Naive thymus-derived CD4-positive, alpha-beta T cell (primary cell): ENCODE measurements at regions of chr5 and their contacts with region 1.

Region 1: GRCh38 chr5:131796793-131797693 is at the start of gene FNIP1:
- DNase-seq: peak; percentile 96 to 99 (median 97)
- ATAC-seq: peak; percentile 98
- H3K4me3 ChIP-seq: peak within 1 kb of the TSS; percentile 90
- H3K4me3 Mint-ChIP-seq: peak within 1 kb of the TSS; percentile 88 to 99 (median 97)
- H3K27ac ChIP-seq: peak within 1 kb of the TSS; percentile 95
- H3K27ac Mint-ChIP-seq: peak within 1 kb of the TSS; percentile 92 to 98 (median 97)
- H3K4me1 ChIP-seq: peaks cover 0 to 19% of the 10 kb centered on the region in 2 donors
- H3K4me1 Mint-ChIP-seq: peaks cover 11 to 41% (median 36%) of the 10 kb centered on the region in 7 donors
- H3K27me3 ChIP-seq: no peaks in the 10 kb centered on the region
- H3K27me3 Mint-ChIP-seq: peaks cover 0 to 10% (median 0%) of the 10 kb centered on the region in 5 donors
- total RNA-seq, gene FNIP1: 30.5 to 48.5 (median 40.3) TPM

Region 2: GRCh38 chr5:131165119-131165727 is 631.8 kb before region 1 on chr5 and contains the start of gene HINT1:
- CTCF ChIA-PET with region 1: no interaction called
- POLR2A ChIA-PET with region 1: no interaction called
- intact Hi-C with region 1: loop called in 1 of 2 experiments (anchors 2 kb)
- DNase-seq: peak; percentile 86 to 98 (median 93)
- ATAC-seq: peak; percentile 89
- H3K4me3 ChIP-seq: peak within 1 kb of the TSS; percentile 97
- H3K4me3 Mint-ChIP-seq: peak within 1 kb of the TSS; percentile 93 to 98 (median 97)
- H3K27ac ChIP-seq: peak within 1 kb of the TSS; percentile 91
- H3K27ac Mint-ChIP-seq: peak within 1 kb of the TSS; percentile 95 to 99 (median 98)
- H3K4me1 ChIP-seq: peaks cover 15 to 23% of the 10 kb centered on the region in 2 donors
- H3K4me1 Mint-ChIP-seq: peaks cover 28 to 74% (median 61%) of the 10 kb centered on the region in 7 donors
- H3K27me3 ChIP-seq: no peaks in the 10 kb centered on the region
- H3K27me3 Mint-ChIP-seq: no peaks in the 10 kb centered on the region
- total RNA-seq, gene HINT1: 172 to 319 (median 233) TPM

Region 3: DNA sequence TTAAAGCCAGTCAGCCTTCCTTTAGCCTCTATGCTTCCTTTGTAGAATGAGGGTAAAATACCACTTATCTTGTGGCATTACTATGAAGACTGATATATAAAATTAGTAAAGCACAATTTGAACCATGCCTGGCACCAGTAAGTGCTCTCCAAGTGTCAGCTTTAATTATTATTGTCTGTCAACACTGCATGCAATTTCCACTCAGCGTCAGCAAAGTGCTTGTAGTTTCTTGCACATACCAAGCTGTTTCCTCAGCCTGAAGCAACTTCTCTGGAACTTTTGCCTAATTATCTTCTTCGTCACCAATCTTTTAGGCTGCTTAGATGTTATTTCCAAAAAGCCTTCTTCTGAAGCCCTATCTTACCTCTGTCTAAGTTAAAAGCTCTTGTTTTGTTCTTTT is 355.9 kb before region 1 on chr5:
- CTCF ChIA-PET with region 1: no interaction called
- POLR2A ChIA-PET with region 1: no interaction called
- intact Hi-C with region 1: loop called in 1 of 2 experiments (anchors 10 kb)
- DNase-seq: no peak
- ATAC-seq: no peak
- H3K4me3 ChIP-seq: no peak overlapping the region
- H3K4me3 Mint-ChIP-seq: peak overlapping the region in 1 of 10 donors; percentile 30
- H3K27ac ChIP-seq: no peak overlapping the region
- H3K27ac Mint-ChIP-seq: peak overlapping the region in 7 of 9 donors; percentile 39 to 80 (median 60)
- H3K4me1 ChIP-seq: no peaks in the 10 kb centered on the region
- H3K4me1 Mint-ChIP-seq: peaks cover 4 to 52% (median 35%) of the 10 kb centered on the region in 7 donors
- H3K27me3 ChIP-seq: no peaks in the 10 kb centered on the region
- H3K27me3 Mint-ChIP-seq: no peaks in the 10 kb centered on the region

Region 4: GRCh38 chr5:131640043-131640856 is 156.8 kb before region 1 on chr5:
- CTCF ChIA-PET with region 1: no interaction called
- POLR2A ChIA-PET with region 1: interaction called, 18 read pairs
- intact Hi-C with region 1: loop called (anchors 1 kb)
- DNase-seq: peak in 8 of 9 donors; percentile 23 to 79 (median 42)
- ATAC-seq: peak; percentile 86
- H3K4me3 ChIP-seq: no peak overlapping the region
- H3K4me3 Mint-ChIP-seq: peak overlapping the region; percentile 18 to 81 (median 68)
- H3K27ac ChIP-seq: peak overlapping the region; percentile 64
- H3K27ac Mint-ChIP-seq: peak overlapping the region; percentile 39 to 97 (median 92)
- H3K4me1 ChIP-seq: peaks cover 11 to 26% of the 10 kb centered on the region in 2 donors
- H3K4me1 Mint-ChIP-seq: peaks cover 14 to 53% (median 34%) of the 10 kb centered on the region in 7 donors
- H3K27me3 ChIP-seq: no peaks in the 10 kb centered on the region
- H3K27me3 Mint-ChIP-seq: peaks cover 0 to under 1% (median 0%) of the 10 kb centered on the region in 5 donors

Region 5: DNA sequence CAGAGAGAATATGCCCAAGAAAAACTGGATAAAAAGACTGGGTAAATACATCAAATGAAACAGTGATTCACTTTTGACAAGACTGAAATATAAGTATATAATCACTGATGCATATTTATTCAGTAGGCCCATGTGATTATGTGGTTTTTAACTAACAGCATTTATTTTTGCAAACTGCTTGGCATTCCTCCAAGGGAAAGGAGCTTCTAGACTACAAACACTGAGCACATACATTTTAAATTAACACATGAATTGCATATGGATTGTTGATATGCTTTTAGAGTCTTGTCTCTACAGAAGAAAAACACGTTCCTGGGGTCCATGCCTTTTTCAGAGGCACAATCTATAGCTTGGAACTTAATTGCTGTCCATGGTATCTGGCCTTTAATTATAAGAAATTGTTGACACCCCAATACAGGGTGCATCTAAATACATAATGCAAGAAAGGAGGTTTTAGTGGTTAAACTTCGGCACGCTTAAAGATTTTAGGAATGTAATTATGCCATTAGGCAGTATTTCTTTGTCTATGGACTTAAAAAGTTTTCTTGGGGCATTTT is 155.3 kb after region 1 on chr5:
- CTCF ChIA-PET with region 1: no interaction called
- POLR2A ChIA-PET with region 1: no interaction called
- intact Hi-C with region 1: no loop called
- DNase-seq: no peak
- ATAC-seq: no peak
- H3K4me3 ChIP-seq: no peak overlapping the region
- H3K4me3 Mint-ChIP-seq: no peak overlapping the region
- H3K27ac ChIP-seq: no peak overlapping the region
- H3K27ac Mint-ChIP-seq: no peak overlapping the region
- H3K4me1 ChIP-seq: no peaks in the 10 kb centered on the region
- H3K4me1 Mint-ChIP-seq: peaks cover 0 to 6% (median 0%) of the 10 kb centered on the region in 7 donors
- H3K27me3 ChIP-seq: no peaks in the 10 kb centered on the region
- H3K27me3 Mint-ChIP-seq: peaks cover 0 to 20% (median 0%) of the 10 kb centered on the region in 5 donors

Region 6: GRCh38 chr5:132007399-132008165 is 210.5 kb after region 1 on chr5:
- CTCF ChIA-PET with region 1: interaction called, 3 read pairs
- POLR2A ChIA-PET with region 1: no interaction called
- intact Hi-C with region 1: loop called (anchors 1 to 5 kb)
- DNase-seq: peak; percentile 47 to 73 (median 64)
- ATAC-seq: peak; percentile 74
- H3K4me3 ChIP-seq: no peak overlapping the region
- H3K4me3 Mint-ChIP-seq: peak overlapping the region in 1 of 10 donors; percentile 3
- H3K27ac ChIP-seq: no peak overlapping the region
- H3K27ac Mint-ChIP-seq: peak overlapping the region in 2 of 9 donors; percentile 3 to 43
- H3K4me1 ChIP-seq: peaks cover 3 to 7% of the 10 kb centered on the region in 2 donors
- H3K4me1 Mint-ChIP-seq: peaks cover 19 to 39% (median 20%) of the 10 kb centered on the region in 7 donors
- H3K27me3 ChIP-seq: no peaks in the 10 kb centered on the region
- H3K27me3 Mint-ChIP-seq: peaks cover 4 to 47% (median 18%) of the 10 kb centered on the region in 5 donors

Region 7: DNA sequence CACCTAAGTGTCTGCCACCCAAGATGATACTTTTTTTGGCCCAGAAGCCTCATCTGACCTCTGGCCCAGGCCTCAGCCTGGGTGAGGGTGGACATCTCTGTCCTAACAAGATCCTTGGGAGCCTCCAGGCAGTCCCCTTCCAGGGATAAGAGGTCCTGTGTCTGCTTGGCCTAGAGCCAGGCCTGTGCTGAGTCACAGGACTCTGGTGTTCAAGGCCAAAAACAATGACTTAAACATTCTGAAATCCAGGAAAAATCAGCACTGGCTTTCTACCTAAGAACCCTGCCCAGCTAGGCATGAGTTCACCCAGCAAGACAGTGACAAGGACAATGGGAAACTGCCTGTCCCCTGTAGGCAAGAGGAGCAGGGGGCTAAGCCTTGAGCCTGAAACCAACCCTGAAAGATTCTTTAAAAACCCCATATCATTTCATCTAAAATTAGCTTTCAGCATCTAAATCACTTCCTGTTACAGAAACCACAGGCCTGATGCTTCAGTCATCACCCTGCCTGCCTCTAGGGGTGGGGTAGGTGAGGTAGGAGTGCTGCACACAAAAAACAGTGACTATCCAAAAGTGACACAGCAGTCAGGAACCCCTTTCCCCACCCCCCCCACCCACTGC is 306.4 kb after region 1 on chr5:
- CTCF ChIA-PET with region 1: no interaction called
- POLR2A ChIA-PET with region 1: no interaction called
- intact Hi-C with region 1: loop called in 1 of 2 experiments (anchors 1 kb)
- DNase-seq: peak in 8 of 9 donors; percentile 49 to 82 (median 72)
- ATAC-seq: peak; percentile 92
- H3K4me3 ChIP-seq: peak overlapping the region; percentile 0
- H3K4me3 Mint-ChIP-seq: peak overlapping the region in 9 of 10 donors; percentile 16 to 74 (median 56)
- H3K27ac ChIP-seq: no peak overlapping the region
- H3K27ac Mint-ChIP-seq: peak overlapping the region in 8 of 9 donors; percentile 14 to 86 (median 64)
- H3K4me1 ChIP-seq: peaks cover 40 to 72% of the 10 kb centered on the region in 2 donors
- H3K4me1 Mint-ChIP-seq: peaks cover 42 to 86% (median 51%) of the 10 kb centered on the region in 7 donors
- H3K27me3 ChIP-seq: no peaks in the 10 kb centered on the region
- H3K27me3 Mint-ChIP-seq: no peaks in the 10 kb centered on the region

Region 8: GRCh38 chr5:132963175-132964104 is 1166.4 kb after region 1 on chr5 and contains the start of gene AFF4:
- CTCF ChIA-PET with region 1: no interaction called
- POLR2A ChIA-PET with region 1: no interaction called
- intact Hi-C with region 1: loop called in 1 of 2 experiments (anchors 10 kb)
- DNase-seq: peak; percentile 81 to 90 (median 85)
- ATAC-seq: peak; percentile 92
- H3K4me3 ChIP-seq: peak within 1 kb of the TSS; percentile 65
- H3K4me3 Mint-ChIP-seq: peak within 1 kb of the TSS; percentile 90 to 100 (median 98)
- H3K27ac ChIP-seq: peak within 1 kb of the TSS; percentile 94
- H3K27ac Mint-ChIP-seq: peak within 1 kb of the TSS; percentile 96 to 100 (median 98)
- H3K4me1 ChIP-seq: peaks cover 10 to 22% of the 10 kb centered on the region in 2 donors
- H3K4me1 Mint-ChIP-seq: peaks cover 26 to 52% (median 38%) of the 10 kb centered on the region in 7 donors
- H3K27me3 ChIP-seq: no peaks in the 10 kb centered on the region
- H3K27me3 Mint-ChIP-seq: no peaks in the 10 kb centered on the region
- total RNA-seq, gene AFF4: 39.7 to 82.3 (median 69.0) TPM